ENCODE measurements at regions of chr12 and their contacts with region 1.

Region 1: DNA sequence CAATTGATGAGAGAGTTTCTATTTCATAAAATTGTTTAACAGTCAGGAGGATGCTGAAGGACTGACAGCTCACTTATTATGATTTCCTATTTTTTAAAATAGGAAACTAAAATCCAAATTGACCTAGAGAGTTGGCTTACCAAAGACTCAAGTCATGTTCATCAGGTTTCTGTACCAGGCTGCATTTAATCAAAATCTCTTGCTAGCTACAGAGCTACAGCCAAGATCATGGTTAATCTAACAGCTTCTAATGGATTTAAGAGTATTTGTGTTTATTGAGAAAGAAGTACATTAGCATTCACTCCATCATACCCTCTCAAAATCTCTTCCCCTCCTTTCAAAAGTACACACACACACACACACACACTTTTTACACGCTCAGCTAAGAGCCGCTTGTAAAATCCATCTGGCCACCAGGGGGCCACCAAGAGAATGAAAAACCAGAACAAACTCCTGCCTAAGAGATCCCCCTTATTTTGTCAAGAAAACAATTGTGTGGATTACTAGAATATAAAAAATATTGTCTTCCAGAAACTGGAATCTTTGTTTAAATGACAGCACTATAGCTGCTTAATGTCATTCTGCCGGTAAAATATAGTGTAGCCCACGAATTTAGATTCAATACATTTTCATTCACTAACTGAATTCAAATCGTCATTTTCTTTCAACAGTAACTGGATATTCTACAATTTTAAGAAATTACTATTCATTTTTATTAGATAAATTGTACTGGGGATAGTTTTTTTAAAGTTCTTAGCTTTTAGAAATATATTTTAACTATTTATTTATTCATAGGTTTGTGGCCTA is 334.0 kb downstream of the BTG1 start:
- DNase-seq: peak; percentile 19 to 27
- ATAC-seq: peak; percentile 50 to 60
- H3K4me3 ChIP-seq: no peak overlapping the region
- H3K27ac ChIP-seq: no peak overlapping the region
- H3K4me1 ChIP-seq: no peaks in the 10 kb centered on the region
- H3K27me3 ChIP-seq: no peaks in the 10 kb centered on the region
- CTCF ChIP-seq: peak; percentile 61 to 75 (median 68)
- POLR2A ChIP-seq: no peak

Region 2: DNA sequence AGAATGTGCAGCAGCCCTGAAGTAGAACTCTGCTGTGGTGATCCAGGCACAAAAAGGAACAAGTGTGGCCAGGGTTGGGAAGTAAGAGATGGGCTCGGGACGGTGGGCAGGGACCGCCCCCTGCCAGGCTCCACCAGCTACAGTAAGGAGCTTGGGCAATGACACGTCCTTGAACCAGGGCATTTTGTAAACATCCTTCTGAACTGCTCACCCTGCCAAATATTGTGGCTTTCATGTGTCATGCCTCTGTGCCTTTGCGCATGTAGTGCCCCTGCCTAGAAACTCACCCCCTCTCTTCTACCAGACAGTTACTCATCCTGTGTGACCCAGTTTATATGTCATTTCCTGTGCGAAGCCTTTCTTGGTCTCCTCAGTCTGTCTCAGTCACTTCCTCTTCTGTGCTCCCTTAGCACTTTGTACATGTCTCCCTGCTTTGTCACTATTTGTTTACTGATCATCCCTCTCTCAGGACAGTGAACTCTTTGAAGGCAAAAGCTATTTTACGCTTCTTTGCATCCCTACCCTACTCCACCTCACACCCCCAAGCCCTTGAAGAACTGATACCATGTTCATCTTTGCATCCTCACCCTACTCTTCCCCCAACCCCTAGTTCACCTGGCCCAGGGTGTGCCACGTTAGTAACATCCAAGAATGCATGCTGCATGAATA is 782.2 kb after region 1 on chr12:
- in situ Hi-C with region 1: loop called in 1 of 4 experiments (anchors 25 kb)
- intact Hi-C with region 1: no loop called
- DNase-seq: peak in 1 of 2 donors; percentile 28
- ATAC-seq: peak; percentile 52 to 56
- H3K4me3 ChIP-seq: no peak overlapping the region
- H3K27ac ChIP-seq: no peak overlapping the region
- H3K4me1 ChIP-seq: no peaks in the 10 kb centered on the region
- H3K27me3 ChIP-seq: no peaks in the 10 kb centered on the region
- CTCF ChIP-seq: no peak
- POLR2A ChIP-seq: no peak